ENCODE measurements at regions of chr11 and their contacts with region 1.

Region 1: GRCh38 chr11:7495882-7496551 is 10.7 kb downstream of the OLFML1 start:
- DNase-seq: peak; percentile 82
- ATAC-seq: peak; percentile 83
- H3K4me3 ChIP-seq: no peak overlapping the region
- H3K4me3 Mint-ChIP-seq: peak overlapping the region; percentile 76
- H3K27ac ChIP-seq: peak overlapping the region; percentile 79 to 90
- H3K27ac Mint-ChIP-seq: peak overlapping the region; percentile 94
- H3K4me1 ChIP-seq: peaks cover 67 to 73% of the 10 kb centered on the region in 2 donors
- H3K4me1 Mint-ChIP-seq: peaks cover 66% of the 10 kb centered on the region
- H3K27me3 ChIP-seq: no peaks in the 10 kb centered on the region
- H3K27me3 Mint-ChIP-seq: no peaks in the 10 kb centered on the region
- CTCF ChIP-seq: no peak

Region 2: DNA sequence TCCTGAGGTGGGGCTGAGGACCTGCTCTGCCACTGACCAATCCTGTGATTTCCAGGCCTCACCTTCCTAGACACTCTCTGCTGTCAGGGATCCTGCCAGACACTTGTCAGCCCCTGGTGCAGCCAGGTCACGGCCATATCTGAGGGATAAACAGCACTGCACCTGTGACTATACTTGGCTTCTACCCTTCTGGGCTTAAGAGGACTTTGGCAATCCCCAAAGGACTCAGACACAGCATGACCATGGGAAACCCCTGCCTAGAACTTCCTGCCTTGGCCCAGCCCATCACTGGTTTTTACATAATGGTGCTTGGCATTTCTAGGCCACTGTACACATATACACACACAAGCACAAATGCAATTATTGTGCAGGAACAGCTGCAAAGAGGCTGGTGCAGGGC is 22.3 kb before region 1 on chr11:
- CTCF ChIA-PET with region 1: interaction called, 6 read pairs
- POLR2A ChIA-PET with region 1: no interaction called
- intact Hi-C with region 1: loop called (anchors 1 kb)
- DNase-seq: peak; percentile 76
- ATAC-seq: peak; percentile 98
- H3K4me3 ChIP-seq: no peak overlapping the region
- H3K4me3 Mint-ChIP-seq: peak overlapping the region; percentile 51
- H3K27ac ChIP-seq: peak overlapping the region; percentile 25 to 76
- H3K27ac Mint-ChIP-seq: peak overlapping the region; percentile 85
- H3K4me1 ChIP-seq: peaks cover 28 to 30% of the 10 kb centered on the region in 2 donors
- H3K4me1 Mint-ChIP-seq: peaks cover 36% of the 10 kb centered on the region
- H3K27me3 ChIP-seq: no peaks in the 10 kb centered on the region
- H3K27me3 Mint-ChIP-seq: no peaks in the 10 kb centered on the region
- CTCF ChIP-seq: no peak